OCI-LY7 (cell line): ENCODE measurements at regions of chr16 and their contacts with region 1.

Region 1: DNA sequence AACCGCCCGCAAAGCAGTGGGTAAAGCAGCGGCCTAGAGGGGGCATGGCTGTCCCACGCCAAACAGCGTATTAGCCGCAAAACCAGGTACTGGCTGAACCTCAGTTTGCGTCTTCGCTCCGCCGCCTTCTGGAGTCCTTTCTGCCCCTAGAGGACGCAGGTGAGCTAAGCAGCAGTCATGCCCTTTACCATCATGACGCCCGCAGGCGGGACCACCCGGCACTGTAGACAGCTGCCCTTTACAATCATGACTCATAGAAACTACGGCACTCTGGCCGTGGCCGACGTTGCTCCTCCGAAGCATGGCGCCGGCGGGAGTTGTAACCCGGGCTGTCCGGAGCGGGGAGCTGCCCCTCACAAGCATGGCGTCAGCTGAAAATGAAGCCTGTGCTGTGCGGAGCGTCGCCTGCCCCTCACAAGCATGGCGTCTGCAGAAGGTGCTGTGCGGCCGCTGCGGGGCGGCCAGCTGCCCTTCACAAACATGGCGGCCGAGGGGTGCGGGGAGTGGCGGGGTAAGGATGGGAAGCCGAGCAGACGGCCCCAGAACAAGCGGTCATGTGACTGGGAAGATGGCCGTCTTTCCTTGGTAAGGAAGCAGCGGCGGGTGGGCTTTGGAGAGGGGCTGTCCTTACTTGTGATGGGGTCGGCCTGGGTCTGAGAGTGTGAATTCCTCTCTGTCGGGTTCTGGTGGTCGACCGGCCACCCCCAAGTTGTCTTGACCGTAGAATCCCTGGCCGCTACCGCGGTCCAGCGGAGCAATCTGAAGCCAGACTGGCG is at the start of gene VPS35L:
- DNase-seq: peak; percentile 97
- H3K4me3 ChIP-seq: peak within 1 kb of the TSS; percentile 88
- H3K27ac ChIP-seq: peak within 1 kb of the TSS; percentile 57
- H3K4me1 ChIP-seq: peaks cover 14% of the 10 kb centered on the region
- CTCF ChIP-seq: peak; percentile 81
- total RNA-seq, gene VPS35L: 13.1 and 16.5 TPM in 2 replicates

Region 2: GRCh38 chr16:19488213-19488640 is 67.1 kb before region 1 on chr16:
- CTCF ChIA-PET with region 1: no interaction called
- POLR2A ChIA-PET with region 1: no interaction called
- intact Hi-C with region 1: no loop called
- DNase-seq: no peak
- H3K4me3 ChIP-seq: no peak overlapping the region
- H3K27ac ChIP-seq: no peak overlapping the region
- H3K4me1 ChIP-seq: peaks cover 3% of the 10 kb centered on the region
- CTCF ChIP-seq: no peak

Region 3: DNA sequence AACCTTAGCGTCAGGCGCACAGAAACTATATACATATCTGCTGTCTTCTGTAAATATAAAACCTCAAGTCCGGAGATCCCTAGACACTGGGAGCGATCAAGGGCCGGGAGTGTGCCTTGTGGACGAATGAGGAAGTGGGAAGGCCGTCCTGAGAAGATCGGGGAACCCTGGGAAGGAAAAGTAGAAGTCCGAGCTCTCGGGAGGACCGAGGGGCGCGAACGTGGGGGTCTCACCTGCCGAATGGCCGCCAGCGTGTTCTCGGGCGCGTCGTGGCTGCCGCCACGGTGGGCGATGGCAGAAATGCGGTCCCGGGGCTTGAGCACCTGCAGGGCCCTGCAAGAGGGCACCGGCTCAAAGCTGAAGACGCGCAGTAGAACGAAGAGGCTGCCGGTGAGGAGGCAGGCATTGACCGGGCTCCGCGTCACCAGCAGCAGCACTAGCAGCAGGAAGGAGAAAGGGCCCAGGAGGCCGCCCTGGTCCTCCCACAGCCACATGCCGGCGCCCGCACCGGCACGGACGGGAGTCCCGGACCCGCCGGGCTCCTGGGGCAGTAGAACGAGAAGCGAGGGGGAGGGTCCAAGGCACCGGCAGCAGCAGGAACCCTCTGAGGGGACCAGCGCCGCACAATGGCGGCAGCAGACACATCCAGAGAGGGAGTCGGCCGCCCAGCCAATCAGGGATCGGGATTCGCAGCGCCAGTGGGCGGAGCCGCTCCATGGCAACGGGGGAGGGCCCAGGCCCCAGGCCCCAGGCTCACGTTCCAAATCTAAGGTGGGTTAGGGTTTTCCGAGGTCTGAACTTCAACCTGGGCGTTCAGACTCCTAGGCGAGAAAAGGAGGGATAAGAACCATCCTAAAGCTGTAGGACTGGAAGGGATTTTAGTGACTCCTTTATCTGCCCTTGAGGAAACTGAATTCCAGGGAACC is 33.6 kb before region 1 on chr16 and contains the start of gene GDE1:
- CTCF ChIA-PET with region 1: interaction called, 3 read pairs
- POLR2A ChIA-PET with region 1: interaction called, 26 read pairs
- intact Hi-C with region 1: loop called (anchors 2 kb)
- DNase-seq: peak; percentile 94
- H3K4me3 ChIP-seq: peak within 1 kb of the TSS; percentile 83
- H3K27ac ChIP-seq: peak within 1 kb of the TSS; percentile 70
- H3K4me1 ChIP-seq: peaks cover 52% of the 10 kb centered on the region
- CTCF ChIP-seq: peak; percentile 62
- total RNA-seq, gene GDE1: 18.5 and 23.4 TPM in 2 replicates

Region 4: GRCh38 chr16:19613834-19614233 is 58.5 kb after region 1 on chr16:
- CTCF ChIA-PET with region 1: no interaction called
- POLR2A ChIA-PET with region 1: no interaction called
- intact Hi-C with region 1: no loop called
- DNase-seq: no peak
- H3K4me3 ChIP-seq: no peak overlapping the region
- H3K27ac ChIP-seq: no peak overlapping the region
- H3K4me1 ChIP-seq: no peaks in the 10 kb centered on the region
- CTCF ChIP-seq: no peak

Region 5: GRCh38 chr16:19717771-19718602 is 162.6 kb after region 1 on chr16 and contains the starts of genes IQCK and KNOP1:
- CTCF ChIA-PET with region 1: no interaction called
- POLR2A ChIA-PET with region 1: no interaction called
- intact Hi-C with region 1: loop called (anchors 5 kb)
- DNase-seq: peak; percentile 92
- H3K4me3 ChIP-seq: peak within 1 kb of the TSS; percentile 88
- H3K27ac ChIP-seq: peak within 1 kb of the TSS; percentile 33
- H3K4me1 ChIP-seq: peaks cover 19% of the 10 kb centered on the region
- CTCF ChIP-seq: no peak
- total RNA-seq, gene IQCK: 1.3 and 2.2 TPM in 2 replicates
- total RNA-seq, gene KNOP1: 19.7 and 37.9 TPM in 2 replicates

Region 6: GRCh38 chr16:19886073-19886941 is 331.0 kb after region 1 on chr16:
- CTCF ChIA-PET with region 1: no interaction called
- POLR2A ChIA-PET with region 1: interaction called, 4 read pairs
- intact Hi-C with region 1: loop called (anchors 1 kb)
- DNase-seq: peak; percentile 74
- H3K4me3 ChIP-seq: no peak overlapping the region
- H3K27ac ChIP-seq: no peak overlapping the region
- H3K4me1 ChIP-seq: no peaks in the 10 kb centered on the region
- CTCF ChIP-seq: peak; percentile 94

Region 7: GRCh38 chr16:20383106-20384029 is 828.0 kb after region 1 on chr16:
- CTCF ChIA-PET with region 1: no interaction called
- POLR2A ChIA-PET with region 1: no interaction called
- intact Hi-C with region 1: loop called (anchors 5 kb)
- DNase-seq: peak; percentile 63
- H3K4me3 ChIP-seq: no peak overlapping the region
- H3K27ac ChIP-seq: no peak overlapping the region
- H3K4me1 ChIP-seq: no peaks in the 10 kb centered on the region
- CTCF ChIP-seq: peak; percentile 81